Pancreas (tissue), 10 donors: ENCODE measurements at regions of chr21 and their contacts with region 1.

Region 1: DNA sequence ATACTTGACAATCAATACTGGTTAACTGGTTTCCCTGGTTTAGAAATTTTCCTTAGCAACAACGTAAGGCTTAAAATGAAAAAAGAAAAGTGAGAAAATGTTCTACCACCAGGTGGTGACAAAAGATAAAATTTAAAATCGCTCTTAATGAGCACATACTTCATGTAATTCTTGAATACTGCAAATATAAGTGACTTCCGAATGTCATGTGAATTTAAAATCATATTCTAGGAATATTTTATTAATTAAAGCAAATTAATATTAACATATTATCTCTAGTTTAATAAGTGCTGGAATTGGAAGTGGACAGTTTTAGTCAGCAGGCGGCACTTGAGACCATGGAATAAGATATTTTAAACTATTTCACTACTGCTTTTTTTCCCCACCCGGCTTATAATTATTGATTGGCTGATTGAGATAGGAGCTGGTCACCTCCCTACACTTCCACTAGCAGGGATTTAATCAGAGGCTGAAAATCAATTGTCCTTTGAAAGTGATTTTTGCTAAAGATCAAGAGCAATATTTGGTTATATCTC is 5.0 kb upstream of the ADAMTS1 start:
- DNase-seq: no peak
- ATAC-seq: peak in 1 of 4 donors; percentile 36
- H3K4me3 ChIP-seq: no peak overlapping the region
- H3K27ac ChIP-seq: no peak overlapping the region
- H3K4me1 ChIP-seq: peaks cover 0 to 10% (median 0%) of the 10 kb centered on the region in 3 donors
- H3K27me3 ChIP-seq: no peaks in the 10 kb centered on the region
- CTCF ChIP-seq: peak; percentile 5 to 67 (median 50)

Region 2: DNA sequence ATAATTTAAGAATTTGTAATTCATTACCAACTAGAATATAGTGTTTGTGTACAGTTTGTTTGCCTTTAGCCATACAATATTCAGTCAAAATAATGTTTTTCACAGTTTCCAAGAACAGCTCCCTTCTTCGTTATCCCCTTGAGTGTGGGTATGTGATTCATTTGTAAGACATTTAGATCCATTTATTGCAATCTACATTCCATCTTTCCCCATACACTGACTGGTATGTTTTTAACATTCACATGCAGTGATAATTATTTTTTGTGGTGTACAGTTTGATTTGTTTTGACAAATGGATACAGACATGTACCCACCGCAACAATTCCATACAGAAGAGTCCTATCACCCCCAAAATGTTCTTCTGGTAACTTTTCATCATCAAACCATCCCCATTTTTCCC is 705.8 kb after region 1 on chr21:
- intact Hi-C with region 1: loop called in 1 of 3 experiments (anchors 10 kb)
- DNase-seq: no peak
- ATAC-seq: no peak
- H3K4me3 ChIP-seq: no peak overlapping the region
- H3K27ac ChIP-seq: no peak overlapping the region
- H3K4me1 ChIP-seq: no peaks in the 10 kb centered on the region
- H3K27me3 ChIP-seq: no peaks in the 10 kb centered on the region
- CTCF ChIP-seq: no peak

Region 3: DNA sequence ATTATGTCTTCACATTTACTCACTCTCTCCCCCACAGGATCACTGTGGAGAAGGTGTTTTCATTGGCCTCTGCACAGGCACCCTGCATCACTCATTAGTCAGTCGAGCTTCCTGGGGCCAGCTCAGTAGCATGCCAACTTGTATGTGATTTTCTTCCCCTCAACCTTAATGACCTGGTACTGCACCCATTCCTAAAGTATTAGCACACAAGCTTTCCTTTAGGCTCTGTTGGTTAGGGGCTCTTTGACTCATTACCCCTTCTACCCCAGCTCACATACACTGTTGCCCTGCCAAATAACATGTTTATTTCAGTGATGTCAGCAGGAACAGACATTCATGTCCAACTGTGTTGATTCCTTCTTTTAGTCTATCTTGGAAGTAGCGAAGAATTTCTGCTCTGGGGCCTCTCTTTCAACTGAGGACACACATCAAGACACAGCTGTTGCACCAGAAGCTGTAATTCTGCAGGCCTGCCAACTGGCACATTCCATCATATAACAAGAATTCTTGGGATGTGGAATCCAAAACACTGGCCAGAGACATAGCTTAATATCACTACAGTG is 720.2 kb after region 1 on chr21:
- intact Hi-C with region 1: loop called in 1 of 3 experiments (anchors 10 kb)
- DNase-seq: no peak
- ATAC-seq: peak in 2 of 4 donors; percentile 31 to 53
- H3K4me3 ChIP-seq: no peak overlapping the region
- H3K27ac ChIP-seq: no peak overlapping the region
- H3K4me1 ChIP-seq: no peaks in the 10 kb centered on the region
- H3K27me3 ChIP-seq: no peaks in the 10 kb centered on the region
- CTCF ChIP-seq: no peak

Region 4: GRCh38 chr21:27694667-27695066 is 844.5 kb after region 1 on chr21:
- intact Hi-C with region 1: loop called in 2 of 3 experiments (anchors 5 kb)
- DNase-seq: no peak
- ATAC-seq: no peak
- H3K4me3 ChIP-seq: no peak overlapping the region
- H3K27ac ChIP-seq: no peak overlapping the region
- H3K4me1 ChIP-seq: no peaks in the 10 kb centered on the region
- H3K27me3 ChIP-seq: no peaks in the 10 kb centered on the region
- CTCF ChIP-seq: no peak

Region 5: GRCh38 chr21:27700974-27701614 is 850.9 kb after region 1 on chr21:
- intact Hi-C with region 1: loop called (anchors 5 to 10 kb)
- DNase-seq: peak; percentile 70 to 88 (median 74)
- ATAC-seq: peak; percentile 86 to 99 (median 98)
- H3K4me3 ChIP-seq: no peak overlapping the region
- H3K27ac ChIP-seq: no peak overlapping the region
- H3K4me1 ChIP-seq: peaks cover 0 to 5% (median 0%) of the 10 kb centered on the region in 3 donors
- H3K27me3 ChIP-seq: no peaks in the 10 kb centered on the region
- CTCF ChIP-seq: peak; percentile 60 to 74 (median 67)

Region 6: GRCh38 chr21:28342212-28342810 is 1492.1 kb after region 1 on chr21:
- intact Hi-C with region 1: loop called in 1 of 3 experiments (anchors 10 kb)
- DNase-seq: no peak
- ATAC-seq: no peak
- H3K4me3 ChIP-seq: no peak overlapping the region
- H3K27ac ChIP-seq: no peak overlapping the region
- H3K4me1 ChIP-seq: peaks cover 0 to 3% (median 0%) of the 10 kb centered on the region in 3 donors
- H3K27me3 ChIP-seq: no peaks in the 10 kb centered on the region
- CTCF ChIP-seq: no peak

Region 7: GRCh38 chr21:28745131-28746016 is 1895.2 kb after region 1 on chr21:
- intact Hi-C with region 1: loop called in 1 of 3 experiments (anchors 10 kb)
- DNase-seq: peak; percentile 60 to 82 (median 68)
- ATAC-seq: peak; percentile 94 to 98 (median 96)
- H3K4me3 ChIP-seq: peak overlapping the region; percentile 6 to 50 (median 23)
- H3K27ac ChIP-seq: peak overlapping the region in 1 of 4 donors; percentile 40
- H3K4me1 ChIP-seq: peaks cover 0 to 3% (median 0%) of the 10 kb centered on the region in 3 donors
- H3K27me3 ChIP-seq: no peaks in the 10 kb centered on the region
- CTCF ChIP-seq: peak; percentile 73 to 85 (median 76)